Activated CD8-positive, alpha-beta T cell treated with anti-CD3 and anti-CD28 coated beads, Interleukin-2, amount 10 ng/mL, durations not matched to agents 7 days and 5 days (primary cell): ENCODE measurements at regions of chr2 and their contacts with region 1.

Region 1: GRCh38 chr2:232623783-232624727 is 9.3 kb upstream of the EFHD1 start:
- DNase-seq: no peak
- ATAC-seq: no peak
- H3K4me3 Mint-ChIP-seq: no peak overlapping the region
- H3K27ac Mint-ChIP-seq: no peak overlapping the region
- H3K4me1 Mint-ChIP-seq: no peaks in the 10 kb centered on the region
- H3K27me3 Mint-ChIP-seq: peaks cover 12% of the 10 kb centered on the region

Region 2: DNA sequence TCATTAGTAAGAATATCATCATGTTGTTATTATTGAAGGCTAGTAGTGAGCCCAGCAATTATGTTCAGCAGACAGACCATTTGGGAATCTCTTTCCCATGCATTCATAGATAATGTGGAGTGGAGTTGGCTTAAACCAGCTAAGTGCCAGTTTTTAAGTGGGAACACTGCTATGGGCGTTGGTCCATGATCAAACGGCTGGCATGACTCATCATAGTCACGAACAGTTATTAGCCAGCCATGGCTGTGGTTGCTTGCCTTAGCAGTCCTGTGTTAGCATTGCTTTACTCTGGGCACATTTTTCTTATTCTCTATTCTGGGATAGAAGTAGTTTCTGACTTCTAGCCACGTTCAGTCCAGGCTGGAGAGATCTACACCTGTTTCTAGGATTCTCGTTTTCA is 55.9 kb before region 1 on chr2:
- CTCF ChIA-PET with region 1: no interaction called
- POLR2A ChIA-PET with region 1: no interaction called
- DNase-seq: no peak
- ATAC-seq: no peak
- H3K4me3 Mint-ChIP-seq: no peak overlapping the region
- H3K27ac Mint-ChIP-seq: no peak overlapping the region
- H3K4me1 Mint-ChIP-seq: peaks cover 6% of the 10 kb centered on the region
- H3K27me3 Mint-ChIP-seq: no peaks in the 10 kb centered on the region

Region 3: GRCh38 chr2:232611551-232612218 is 12.4 kb before region 1 on chr2:
- CTCF ChIA-PET with region 1: interaction called, 19 read pairs
- POLR2A ChIA-PET with region 1: no interaction called
- DNase-seq: peak; percentile 76
- ATAC-seq: peak; percentile 75
- H3K4me3 Mint-ChIP-seq: no peak overlapping the region
- H3K27ac Mint-ChIP-seq: no peak overlapping the region
- H3K4me1 Mint-ChIP-seq: no peaks in the 10 kb centered on the region
- H3K27me3 Mint-ChIP-seq: peaks cover 2% of the 10 kb centered on the region